OCI-LY7 (cell line): ENCODE measurements at regions of chr6 and their contacts with region 1.

Region 1: GRCh38 chr6:159008656-159009288 is 8.8 kb upstream of the RSPH3 start:
- DNase-seq: peak; percentile 85
- H3K4me3 ChIP-seq: peak overlapping the region; percentile 14
- H3K27ac ChIP-seq: peak overlapping the region; percentile 19
- H3K4me1 ChIP-seq: peaks cover 48% of the 10 kb centered on the region
- CTCF ChIP-seq: peak; percentile 89

Region 2: DNA sequence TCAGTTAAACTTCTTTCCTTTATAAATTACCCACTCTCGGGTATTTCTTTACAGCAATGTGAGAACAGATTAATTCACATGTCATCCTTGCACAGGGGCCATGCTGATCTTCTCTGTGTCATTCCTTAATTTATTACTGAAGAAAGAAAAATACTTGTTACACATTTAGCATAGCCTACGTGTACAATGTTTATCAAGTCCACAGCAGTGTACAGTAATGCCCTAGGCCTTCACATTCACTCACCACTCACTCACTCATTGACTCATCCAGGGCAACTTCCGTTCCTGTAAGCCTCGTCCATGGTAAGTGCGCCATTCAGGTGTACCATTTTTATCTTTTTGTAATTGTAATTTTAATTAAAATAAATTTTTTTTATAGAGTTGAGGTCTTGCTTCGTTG is 82.4 kb before region 1 on chr6:
- CTCF ChIA-PET with region 1: no interaction called
- POLR2A ChIA-PET with region 1: no interaction called
- intact Hi-C with region 1: no loop called
- DNase-seq: no peak
- H3K4me3 ChIP-seq: no peak overlapping the region
- H3K27ac ChIP-seq: no peak overlapping the region
- H3K4me1 ChIP-seq: peaks cover 16% of the 10 kb centered on the region
- CTCF ChIP-seq: no peak

Region 3: GRCh38 chr6:159134701-159135364 is 126.1 kb after region 1 on chr6:
- CTCF ChIA-PET with region 1: interaction called, 35 read pairs
- POLR2A ChIA-PET with region 1: interaction called, 9 read pairs
- intact Hi-C with region 1: loop called (anchors 1 kb)
- DNase-seq: peak; percentile 88
- H3K4me3 ChIP-seq: peak overlapping the region; percentile 4
- H3K27ac ChIP-seq: no peak overlapping the region
- H3K4me1 ChIP-seq: peaks cover 52% of the 10 kb centered on the region
- CTCF ChIP-seq: peak; percentile 100

Region 4: GRCh38 chr6:159151266-159151855 is 142.6 kb after region 1 on chr6:
- CTCF ChIA-PET with region 1: interaction called, 3 read pairs
- POLR2A ChIA-PET with region 1: no interaction called
- intact Hi-C with region 1: loop called (anchors 1 kb)
- DNase-seq: peak; percentile 69
- H3K4me3 ChIP-seq: no peak overlapping the region
- H3K27ac ChIP-seq: no peak overlapping the region
- H3K4me1 ChIP-seq: peaks cover 9% of the 10 kb centered on the region
- CTCF ChIP-seq: peak; percentile 96